ENCODE measurements at regions of chr12 and their contacts with region 1.

Region 1: DNA sequence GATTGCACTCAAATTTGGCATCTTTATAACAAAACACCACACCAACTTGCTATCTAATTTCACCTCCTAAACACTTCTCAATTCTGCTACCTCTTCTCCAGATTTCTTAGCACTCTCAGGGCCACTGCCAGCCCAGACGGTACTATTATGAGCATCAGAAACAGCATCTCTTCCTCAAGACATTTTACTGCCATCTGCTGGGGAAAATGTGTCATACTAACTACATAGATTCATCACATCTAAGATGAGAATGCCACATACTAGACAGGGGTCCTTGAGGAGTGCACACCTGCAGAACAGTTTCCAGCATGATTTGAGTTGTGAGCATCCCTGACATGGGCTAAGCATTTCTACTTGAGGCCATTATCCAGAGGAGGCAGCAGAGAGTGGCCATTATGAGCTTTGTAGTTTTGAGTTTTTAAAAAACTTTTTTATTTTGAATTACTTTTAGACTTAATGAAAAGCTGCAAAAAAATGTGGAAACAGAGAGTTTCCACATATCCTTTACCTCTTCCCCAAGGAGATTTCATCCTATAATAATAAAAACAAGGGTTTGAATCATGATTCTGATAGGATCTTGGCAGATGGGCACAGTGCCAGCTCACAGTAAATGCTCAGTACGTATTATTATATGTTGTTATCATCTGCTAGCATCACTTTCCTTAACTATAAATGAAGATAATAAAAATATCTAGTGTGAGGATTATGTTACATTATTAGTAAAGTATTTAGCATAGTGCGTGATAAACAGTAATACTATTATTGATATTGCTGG is 15.2 kb upstream of the GRIP1 start:
- DNase-seq: no peak
- H3K4me3 Mint-ChIP-seq: no peak overlapping the region
- H3K27ac Mint-ChIP-seq: no peak overlapping the region
- H3K4me1 Mint-ChIP-seq: no peaks in the 10 kb centered on the region
- H3K27me3 Mint-ChIP-seq: peaks cover 14% of the 10 kb centered on the region

Region 2: GRCh38 chr12:66107451-66107915 is 586.6 kb before region 1 on chr12:
- intact Hi-C with region 1: loop called (anchors 5 kb)
- DNase-seq: peak; percentile 43
- H3K4me3 Mint-ChIP-seq: no peak overlapping the region
- H3K27ac Mint-ChIP-seq: no peak overlapping the region
- H3K4me1 Mint-ChIP-seq: peaks cover 16% of the 10 kb centered on the region
- H3K27me3 Mint-ChIP-seq: peaks cover 14% of the 10 kb centered on the region

Region 3: GRCh38 chr12:66144791-66145754 is 549.0 kb before region 1 on chr12:
- intact Hi-C with region 1: loop called (anchors 1 kb)
- DNase-seq: no peak
- H3K4me3 Mint-ChIP-seq: no peak overlapping the region
- H3K27ac Mint-ChIP-seq: peak overlapping the region; percentile 58
- H3K4me1 Mint-ChIP-seq: peaks cover 21% of the 10 kb centered on the region
- H3K27me3 Mint-ChIP-seq: no peaks in the 10 kb centered on the region

Region 4: GRCh38 chr12:66269757-66270383 is 424.2 kb before region 1 on chr12:
- intact Hi-C with region 1: loop called (anchors 1 kb)
- DNase-seq: peak; percentile 8
- H3K4me3 Mint-ChIP-seq: no peak overlapping the region
- H3K27ac Mint-ChIP-seq: no peak overlapping the region
- H3K4me1 Mint-ChIP-seq: peaks cover 3% of the 10 kb centered on the region
- H3K27me3 Mint-ChIP-seq: no peaks in the 10 kb centered on the region

Region 5: GRCh38 chr12:67873355-67873754 is 1179.3 kb after region 1 on chr12:
- intact Hi-C with region 1: no loop called
- DNase-seq: no peak
- H3K4me3 Mint-ChIP-seq: no peak overlapping the region
- H3K27ac Mint-ChIP-seq: no peak overlapping the region
- H3K4me1 Mint-ChIP-seq: no peaks in the 10 kb centered on the region
- H3K27me3 Mint-ChIP-seq: no peaks in the 10 kb centered on the region